ENCODE measurements at regions of chr11 and their contacts with region 1.

Region 1: GRCh38 chr11:32562839-32563599 is 20.6 kb upstream of the EIF3M start:
- DNase-seq: no peak
- ATAC-seq: no peak
- H3K4me3 ChIP-seq: no peak overlapping the region
- H3K27ac ChIP-seq: no peak overlapping the region
- H3K4me1 ChIP-seq: no peaks in the 10 kb centered on the region
- H3K27me3 ChIP-seq: no peaks in the 10 kb centered on the region
- CTCF ChIP-seq: no peak

Region 2: GRCh38 chr11:32323814-32324130 is 239.2 kb before region 1 on chr11:
- CTCF ChIA-PET with region 1: no interaction called
- POLR2A ChIA-PET with region 1: no interaction called
- intact Hi-C with region 1: loop called (anchors 1 kb)
- DNase-seq: no peak
- ATAC-seq: no peak
- H3K4me3 ChIP-seq: no peak overlapping the region
- H3K27ac ChIP-seq: no peak overlapping the region
- H3K4me1 ChIP-seq: peaks cover 7% of the 10 kb centered on the region
- H3K27me3 ChIP-seq: no peaks in the 10 kb centered on the region
- CTCF ChIP-seq: no peak

Region 3: DNA sequence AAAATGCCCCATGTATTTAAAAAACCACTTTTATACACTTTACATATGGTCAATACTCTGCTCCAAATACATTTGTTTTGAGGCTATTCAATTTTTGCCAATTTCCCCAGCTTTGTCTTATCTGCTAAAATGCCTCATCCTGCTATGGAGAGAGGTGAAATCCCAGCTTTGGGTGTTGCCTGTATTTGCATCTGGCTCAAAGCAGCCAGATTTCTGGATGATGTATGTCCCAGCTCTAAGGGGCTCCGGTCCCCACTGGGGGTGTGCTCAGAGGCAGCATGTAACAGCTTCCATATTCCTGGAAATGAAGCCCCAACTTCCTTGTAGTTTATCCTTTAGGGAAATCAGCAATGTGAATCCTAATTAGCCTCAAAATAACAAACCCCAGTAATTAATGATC is 187.2 kb before region 1 on chr11:
- CTCF ChIA-PET with region 1: no interaction called
- POLR2A ChIA-PET with region 1: no interaction called
- intact Hi-C with region 1: no loop called
- DNase-seq: no peak
- ATAC-seq: no peak
- H3K4me3 ChIP-seq: no peak overlapping the region
- H3K27ac ChIP-seq: no peak overlapping the region
- H3K4me1 ChIP-seq: no peaks in the 10 kb centered on the region
- H3K27me3 ChIP-seq: no peaks in the 10 kb centered on the region
- CTCF ChIP-seq: no peak

Region 4: DNA sequence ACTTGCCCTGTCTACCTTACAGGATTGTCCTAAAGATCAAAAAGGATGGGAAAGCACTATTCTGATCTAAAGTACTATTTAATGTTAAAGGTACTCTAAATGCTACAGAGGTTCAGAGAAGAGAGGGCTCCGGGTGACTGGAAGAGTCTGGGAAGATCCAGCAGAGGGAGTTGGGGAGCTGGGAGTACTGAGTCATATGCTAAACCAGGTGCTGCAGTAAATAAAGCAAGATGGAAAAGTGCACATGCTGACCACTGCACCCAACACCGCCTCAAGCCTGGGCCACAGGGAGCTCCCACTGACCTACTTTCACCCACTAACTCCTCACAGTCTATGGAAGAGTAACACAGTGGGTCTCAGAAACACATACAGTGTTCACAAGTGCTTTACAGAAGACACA is 177.0 kb before region 1 on chr11:
- CTCF ChIA-PET with region 1: no interaction called
- POLR2A ChIA-PET with region 1: no interaction called
- intact Hi-C with region 1: loop called (anchors 1 kb)
- DNase-seq: peak; percentile 64
- ATAC-seq: peak; percentile 97
- H3K4me3 ChIP-seq: no peak overlapping the region
- H3K27ac ChIP-seq: no peak overlapping the region
- H3K4me1 ChIP-seq: 0 out of 2 replicates have a peak, but pooled peaks cover 4% of the 10 kb centered on the region
- H3K27me3 ChIP-seq: no peaks in the 10 kb centered on the region
- CTCF ChIP-seq: peak; percentile 69

Region 5: DNA sequence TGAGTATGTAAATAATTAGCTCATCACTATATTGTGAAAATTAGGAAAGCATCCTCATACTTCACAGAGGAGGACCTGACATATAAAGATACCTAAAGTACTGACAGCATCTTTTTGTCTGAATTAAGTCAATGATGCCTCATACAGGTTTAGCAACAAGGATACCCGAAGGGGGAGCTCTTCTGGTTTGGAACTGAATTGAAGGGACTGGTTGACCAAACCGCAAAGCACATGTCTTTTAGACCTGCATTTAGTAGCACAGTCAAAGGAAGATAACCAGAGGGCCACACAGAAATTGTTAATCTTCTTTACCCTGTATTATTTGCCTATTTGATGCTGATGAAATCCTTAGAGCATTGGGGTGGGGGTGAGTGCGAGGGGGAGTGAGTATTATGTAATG is 114.8 kb before region 1 on chr11:
- CTCF ChIA-PET with region 1: no interaction called
- POLR2A ChIA-PET with region 1: no interaction called
- intact Hi-C with region 1: loop called (anchors 1 kb)
- DNase-seq: peak; percentile 74
- ATAC-seq: peak; percentile 85
- H3K4me3 ChIP-seq: no peak overlapping the region
- H3K27ac ChIP-seq: no peak overlapping the region
- H3K4me1 ChIP-seq: 0 out of 2 replicates have a peak, but pooled peaks cover 4% of the 10 kb centered on the region
- H3K27me3 ChIP-seq: no peaks in the 10 kb centered on the region
- CTCF ChIP-seq: peak; percentile 75

Measured in PC-3 (cell line).